ENCODE measurements at regions of chr5 and their contacts with region 1.

Region 1: GRCh38 chr5:77180167-77181081 is 30.1 kb upstream of the PDE8B start:
- DNase-seq: peak; percentile 30
- H3K4me3 ChIP-seq: peak overlapping the region; percentile 51
- H3K27ac ChIP-seq: no peak overlapping the region
- H3K4me1 ChIP-seq: no peaks in the 10 kb centered on the region
- H3K27me3 ChIP-seq: peaks cover 24% of the 10 kb centered on the region
- CTCF ChIP-seq: no peak

Region 2: DNA sequence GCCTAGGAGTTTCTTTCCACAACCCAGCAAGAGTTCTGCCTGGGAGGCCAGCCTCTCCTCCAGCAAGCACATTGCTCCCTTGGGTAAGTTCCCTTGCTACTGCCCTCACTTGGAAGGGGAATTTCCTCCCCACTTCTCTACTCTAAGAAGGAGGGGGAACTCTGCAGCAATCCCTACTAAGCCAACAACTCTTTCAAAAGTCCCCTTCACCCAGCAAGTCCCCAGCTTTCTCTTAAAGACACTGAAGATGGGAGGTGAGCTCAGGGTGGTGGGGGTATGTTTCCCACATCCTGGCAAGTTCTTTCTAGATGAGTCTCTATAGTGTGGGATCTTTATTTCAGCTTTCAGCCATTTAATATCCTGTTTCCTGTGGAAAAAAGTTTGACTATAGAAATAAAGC is 79.1 kb after region 1 on chr5:
- CTCF ChIA-PET with region 1: interaction called, 21 read pairs
- POLR2A ChIA-PET with region 1: no interaction called
- intact Hi-C with region 1: no loop called
- DNase-seq: no peak
- H3K4me3 ChIP-seq: no peak overlapping the region
- H3K27ac ChIP-seq: no peak overlapping the region
- H3K4me1 ChIP-seq: no peaks in the 10 kb centered on the region
- H3K27me3 ChIP-seq: peaks cover 4% of the 10 kb centered on the region
- CTCF ChIP-seq: no peak

Region 3: GRCh38 chr5:78016863-78017529 is 836.6 kb after region 1 on chr5:
- CTCF ChIA-PET with region 1: no interaction called
- POLR2A ChIA-PET with region 1: interaction called, 10 read pairs
- intact Hi-C with region 1: no loop called
- DNase-seq: peak; percentile 18
- H3K4me3 ChIP-seq: no peak overlapping the region
- H3K27ac ChIP-seq: no peak overlapping the region
- H3K4me1 ChIP-seq: no peaks in the 10 kb centered on the region
- H3K27me3 ChIP-seq: no peaks in the 10 kb centered on the region
- CTCF ChIP-seq: no peak